Activated naive CD4-positive, alpha-beta T cell treated with anti-CD3 and anti-CD28 coated beads for 36 hours (primary cell): ENCODE measurements at regions of chr2 and their contacts with region 1.

Region 1: DNA sequence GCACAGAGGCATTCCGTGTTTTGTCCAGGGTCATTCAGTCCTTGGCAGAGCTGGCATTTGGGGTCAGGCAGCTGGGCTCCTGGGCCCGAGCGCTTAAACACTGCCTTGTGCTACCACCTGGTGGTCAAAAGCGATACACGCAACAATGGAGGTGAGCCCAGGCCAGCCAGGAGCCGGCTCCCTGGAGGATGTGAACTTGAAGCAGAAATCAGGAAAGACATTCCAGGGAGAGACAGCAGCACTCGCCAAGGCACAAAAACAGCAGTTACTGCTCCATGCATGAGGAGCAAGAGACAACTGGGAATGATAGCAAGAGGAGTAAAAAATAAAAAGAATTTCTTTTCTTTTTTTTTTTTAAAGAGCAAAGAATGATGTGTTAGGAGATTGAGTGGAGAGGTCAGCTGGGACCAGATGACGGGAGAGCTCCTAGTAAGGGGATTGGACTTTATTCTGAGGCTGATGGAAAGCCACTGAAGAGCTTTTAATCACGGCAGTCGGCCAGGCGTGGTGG is 20.7 kb downstream of the SCYGR8 start:
- DNase-seq: peak; percentile 78
- H3K4me3 Mint-ChIP-seq: no peak overlapping the region
- H3K27ac Mint-ChIP-seq: no peak overlapping the region
- H3K4me1 Mint-ChIP-seq: no peaks in the 10 kb centered on the region
- H3K27me3 Mint-ChIP-seq: no peaks in the 10 kb centered on the region

Region 2: GRCh38 chr2:227033471-227034148 is 732.8 kb before region 1 on chr2:
- CTCF ChIA-PET with region 1: no interaction called
- intact Hi-C with region 1: loop called (anchors 1 kb)
- DNase-seq: peak; percentile 36
- H3K4me3 Mint-ChIP-seq: no peak overlapping the region
- H3K27ac Mint-ChIP-seq: no peak overlapping the region
- H3K4me1 Mint-ChIP-seq: no peaks in the 10 kb centered on the region
- H3K27me3 Mint-ChIP-seq: peaks cover 18% of the 10 kb centered on the region

Region 3: DNA sequence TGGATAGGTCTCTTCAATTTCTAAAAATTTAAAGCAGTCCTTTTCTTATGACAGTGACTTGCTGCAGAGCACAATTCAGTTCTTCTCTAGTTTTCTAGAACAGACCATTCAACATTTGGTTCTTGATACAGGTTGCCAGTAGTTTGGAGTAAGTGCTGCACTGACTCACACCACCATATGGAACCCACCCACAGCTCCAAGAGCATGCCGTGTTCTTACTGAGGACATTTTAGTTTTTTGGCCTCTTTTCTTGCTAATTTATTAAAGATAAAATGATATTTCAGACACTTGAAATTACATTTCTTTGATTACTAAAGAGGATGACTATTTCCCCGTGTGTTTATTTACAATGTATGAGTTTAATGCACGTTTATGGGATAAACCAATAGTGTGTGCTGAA is 722.4 kb before region 1 on chr2:
- CTCF ChIA-PET with region 1: no interaction called
- intact Hi-C with region 1: no loop called
- DNase-seq: no peak
- H3K4me3 Mint-ChIP-seq: no peak overlapping the region
- H3K27ac Mint-ChIP-seq: no peak overlapping the region
- H3K4me1 Mint-ChIP-seq: no peaks in the 10 kb centered on the region
- H3K27me3 Mint-ChIP-seq: peaks cover 8% of the 10 kb centered on the region

Region 4: GRCh38 chr2:227238238-227239237 is 527.9 kb before region 1 on chr2:
- CTCF ChIA-PET with region 1: interaction called, 11 read pairs
- intact Hi-C with region 1: loop called (anchors 2 kb)
- DNase-seq: peak; percentile 82
- H3K4me3 Mint-ChIP-seq: no peak overlapping the region
- H3K27ac Mint-ChIP-seq: no peak overlapping the region
- H3K4me1 Mint-ChIP-seq: no peaks in the 10 kb centered on the region
- H3K27me3 Mint-ChIP-seq: peaks cover 7% of the 10 kb centered on the region

Region 5: DNA sequence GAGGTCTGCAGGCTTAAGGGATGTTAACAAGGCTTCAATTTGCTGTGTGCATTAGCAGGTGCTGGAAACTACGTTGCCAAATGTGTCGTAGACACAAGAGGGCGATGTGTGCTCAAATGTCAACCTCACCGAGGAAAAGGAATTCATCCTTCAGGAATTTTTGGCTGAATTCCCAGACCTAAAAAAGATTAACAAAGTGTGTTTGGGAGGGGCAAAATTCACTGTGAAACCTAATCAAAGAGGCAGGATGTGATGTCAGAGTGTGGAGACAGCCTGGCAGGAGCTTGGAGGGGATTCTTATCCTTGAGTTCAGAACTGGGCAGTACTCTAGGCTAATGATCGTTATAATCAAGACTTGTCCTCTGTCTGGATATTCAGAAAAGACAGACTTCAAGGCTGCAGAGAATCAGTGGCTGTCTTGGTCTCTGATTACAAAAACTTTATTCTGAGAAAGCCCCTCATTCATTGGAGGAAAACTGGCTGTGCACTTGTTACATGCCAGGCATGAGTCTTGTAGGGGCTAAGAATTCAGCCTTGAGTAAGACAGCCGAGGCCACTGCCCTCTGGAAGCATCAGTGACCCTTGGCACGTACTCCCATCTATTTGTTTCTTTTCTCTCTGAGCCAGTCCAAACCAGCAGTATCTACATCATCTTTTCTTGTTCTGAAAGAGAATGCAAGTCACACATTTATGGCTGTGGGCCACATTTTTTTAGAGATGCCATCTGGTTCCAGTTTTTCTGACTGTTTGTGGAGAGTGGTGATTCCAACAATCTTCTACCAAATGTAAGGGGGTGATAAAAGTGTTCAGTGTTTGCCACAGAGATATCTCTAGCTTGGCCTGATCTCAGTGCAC is 360.0 kb before region 1 on chr2:
- CTCF ChIA-PET with region 1: interaction called, 35 read pairs
- intact Hi-C with region 1: loop called (anchors 1 kb)
- DNase-seq: peak; percentile 53
- H3K4me3 Mint-ChIP-seq: no peak overlapping the region
- H3K27ac Mint-ChIP-seq: peak overlapping the region; percentile 43
- H3K4me1 Mint-ChIP-seq: peaks cover 71% of the 10 kb centered on the region
- H3K27me3 Mint-ChIP-seq: no peaks in the 10 kb centered on the region

Region 6: DNA sequence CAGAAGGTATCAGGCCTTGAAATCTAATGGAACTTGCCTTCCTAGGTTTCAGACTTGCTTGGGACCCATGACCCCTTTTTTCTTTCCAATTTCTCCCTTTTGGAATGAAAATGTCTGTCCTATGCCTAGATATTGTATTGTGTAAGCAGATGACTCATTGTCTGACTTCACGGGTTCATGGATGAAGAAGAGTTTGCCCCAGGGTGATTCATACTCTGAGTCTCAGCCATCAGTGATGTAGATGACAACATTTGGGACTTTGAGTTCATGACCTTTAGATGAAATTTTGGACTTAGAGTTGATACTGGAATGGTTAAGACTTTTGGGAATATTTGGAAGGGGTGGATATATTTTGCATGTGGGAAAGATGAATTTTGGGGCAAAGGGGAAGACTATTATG is 111.0 kb before region 1 on chr2:
- CTCF ChIA-PET with region 1: interaction called, 50 read pairs
- intact Hi-C with region 1: loop called (anchors 1 kb)
- DNase-seq: peak; percentile 14
- H3K4me3 Mint-ChIP-seq: no peak overlapping the region
- H3K27ac Mint-ChIP-seq: no peak overlapping the region
- H3K4me1 Mint-ChIP-seq: peaks cover 4% of the 10 kb centered on the region
- H3K27me3 Mint-ChIP-seq: peaks cover 3% of the 10 kb centered on the region

Region 7: GRCh38 chr2:227799202-227799601 is 32.8 kb after region 1 on chr2:
- CTCF ChIA-PET with region 1: no interaction called
- intact Hi-C with region 1: no loop called
- DNase-seq: no peak
- H3K4me3 Mint-ChIP-seq: no peak overlapping the region
- H3K27ac Mint-ChIP-seq: no peak overlapping the region
- H3K4me1 Mint-ChIP-seq: no peaks in the 10 kb centered on the region
- H3K27me3 Mint-ChIP-seq: peaks cover 6% of the 10 kb centered on the region

Region 8: GRCh38 chr2:227862227-227862740 is 95.9 kb after region 1 on chr2:
- CTCF ChIA-PET with region 1: interaction called, 22 read pairs
- intact Hi-C with region 1: no loop called
- DNase-seq: peak; percentile 54
- H3K4me3 Mint-ChIP-seq: no peak overlapping the region
- H3K27ac Mint-ChIP-seq: no peak overlapping the region
- H3K4me1 Mint-ChIP-seq: peaks cover 2% of the 10 kb centered on the region
- H3K27me3 Mint-ChIP-seq: no peaks in the 10 kb centered on the region

Region 9: DNA sequence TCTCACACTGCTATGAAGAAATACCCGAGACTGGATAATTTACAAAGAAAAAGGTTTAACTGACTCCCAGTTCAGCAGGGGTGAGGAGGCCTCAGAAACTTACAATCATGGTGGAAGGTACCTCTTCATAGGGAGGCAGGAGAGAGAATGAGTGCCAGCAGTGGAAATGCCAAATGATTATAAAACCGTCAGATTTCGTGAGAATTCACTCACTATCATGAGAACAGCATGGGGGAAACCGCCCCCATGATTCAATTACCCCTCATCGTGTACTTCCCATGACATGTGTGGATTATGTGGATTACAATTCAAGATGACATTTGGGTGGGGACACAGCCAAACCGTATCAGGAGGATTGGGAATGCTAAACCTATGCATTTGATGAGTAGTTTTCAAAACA is 795.4 kb after region 1 on chr2:
- CTCF ChIA-PET with region 1: no interaction called
- intact Hi-C with region 1: no loop called
- DNase-seq: no peak
- H3K4me3 Mint-ChIP-seq: no peak overlapping the region
- H3K27ac Mint-ChIP-seq: no peak overlapping the region
- H3K4me1 Mint-ChIP-seq: no peaks in the 10 kb centered on the region
- H3K27me3 Mint-ChIP-seq: no peaks in the 10 kb centered on the region